GM12878 (cell line): ENCODE measurements at regions of chr2 and their contacts with region 1.

Region 1: GRCh38 chr2:71157124-71157793 is 26.8 kb downstream of the MPHOSPH10 start:
- DNase-seq: no peak
- ATAC-seq: peak; percentile 88
- H3K4me3 ChIP-seq: no peak overlapping the region
- H3K27ac ChIP-seq: no peak overlapping the region
- H3K4me1 ChIP-seq: no peaks in the 10 kb centered on the region
- H3K27me3 ChIP-seq: no peaks in the 10 kb centered on the region
- CTCF ChIP-seq: peak; percentile 58 to 76 (median 68)
- EP300 ChIP-seq: no peak
- POLR2A ChIP-seq: no peak
- RAD21 ChIP-seq: peak; percentile 67

Region 2: GRCh38 chr2:71018625-71019024 is 138.6 kb before region 1 on chr2:
- CTCF ChIA-PET with region 1: interaction called, 17 read pairs
- POLR2A ChIA-PET with region 1: no interaction called
- RAD21 ChIA-PET with region 1: interaction called, 12 read pairs
- SMC1A ChIA-PET with region 1: interaction called, 5 read pairs
- in situ Hi-C with region 1: no loop called
- intact Hi-C with region 1: loop called (anchors 2 kb)
- DNase-seq: no peak
- ATAC-seq: no peak
- H3K4me3 ChIP-seq: no peak overlapping the region
- H3K27ac ChIP-seq: no peak overlapping the region
- H3K4me1 ChIP-seq: no peaks in the 10 kb centered on the region
- H3K27me3 ChIP-seq: no peaks in the 10 kb centered on the region
- CTCF ChIP-seq: no peak
- EP300 ChIP-seq: no peak
- POLR2A ChIP-seq: no peak
- RAD21 ChIP-seq: no peak

Region 3: GRCh38 chr2:71049365-71050360 is 107.6 kb before region 1 on chr2:
- CTCF ChIA-PET with region 1: interaction called, 53 read pairs
- POLR2A ChIA-PET with region 1: no interaction called
- RAD21 ChIA-PET with region 1: interaction called, 31 read pairs
- SMC1A ChIA-PET with region 1: interaction called, 19 read pairs
- in situ Hi-C with region 1: no loop called
- intact Hi-C with region 1: loop called (anchors 1 kb)
- DNase-seq: no peak
- ATAC-seq: peak; percentile 90
- H3K4me3 ChIP-seq: no peak overlapping the region
- H3K27ac ChIP-seq: no peak overlapping the region
- H3K4me1 ChIP-seq: peaks cover 4% of the 10 kb centered on the region; the same call in 1 of the 2 replicates
- H3K27me3 ChIP-seq: no peaks in the 10 kb centered on the region
- CTCF ChIP-seq: peak; percentile 32 to 55 (median 35); a peak in 5 of 6 replicates
- EP300 ChIP-seq: no peak
- POLR2A ChIP-seq: no peak
- RAD21 ChIP-seq: peak; percentile 73

Region 4: GRCh38 chr2:71143782-71144181 is 13.5 kb before region 1 on chr2:
- CTCF ChIA-PET with region 1: interaction called, 11 read pairs
- POLR2A ChIA-PET with region 1: no interaction called
- RAD21 ChIA-PET with region 1: no interaction called
- SMC1A ChIA-PET with region 1: interaction called, 10 read pairs
- in situ Hi-C with region 1: no loop called
- intact Hi-C with region 1: no loop called
- DNase-seq: no peak
- ATAC-seq: no peak
- H3K4me3 ChIP-seq: no peak overlapping the region
- H3K27ac ChIP-seq: no peak overlapping the region
- H3K4me1 ChIP-seq: no peaks in the 10 kb centered on the region
- H3K27me3 ChIP-seq: no peaks in the 10 kb centered on the region
- CTCF ChIP-seq: no peak
- EP300 ChIP-seq: no peak
- POLR2A ChIP-seq: no peak
- RAD21 ChIP-seq: no peak

Region 5: GRCh38 chr2:71385012-71385411 is 227.8 kb after region 1 on chr2:
- CTCF ChIA-PET with region 1: no interaction called
- POLR2A ChIA-PET with region 1: no interaction called
- RAD21 ChIA-PET with region 1: no interaction called
- SMC1A ChIA-PET with region 1: no interaction called
- in situ Hi-C with region 1: no loop called
- intact Hi-C with region 1: loop called (anchors 10 kb)
- DNase-seq: no peak
- ATAC-seq: no peak
- H3K4me3 ChIP-seq: no peak overlapping the region
- H3K27ac ChIP-seq: no peak overlapping the region
- H3K4me1 ChIP-seq: no peaks in the 10 kb centered on the region
- H3K27me3 ChIP-seq: no peaks in the 10 kb centered on the region
- CTCF ChIP-seq: no peak
- EP300 ChIP-seq: no peak
- POLR2A ChIP-seq: no peak
- RAD21 ChIP-seq: no peak

Region 6: GRCh38 chr2:71449343-71449742 is 292.1 kb after region 1 on chr2:
- CTCF ChIA-PET with region 1: no interaction called
- POLR2A ChIA-PET with region 1: no interaction called
- RAD21 ChIA-PET with region 1: no interaction called
- SMC1A ChIA-PET with region 1: no interaction called
- in situ Hi-C with region 1: no loop called
- intact Hi-C with region 1: no loop called
- DNase-seq: no peak
- ATAC-seq: peak; percentile 43; the same call in 2 of the 3 replicates
- H3K4me3 ChIP-seq: no peak overlapping the region
- H3K27ac ChIP-seq: no peak overlapping the region
- H3K4me1 ChIP-seq: no peaks in the 10 kb centered on the region
- H3K27me3 ChIP-seq: peaks cover 4 to 11% of the 10 kb centered on the region in 2 experiments; a peak in 3 of 4 replicates
- CTCF ChIP-seq: no peak
- EP300 ChIP-seq: no peak
- POLR2A ChIP-seq: no peak
- RAD21 ChIP-seq: no peak

Region 7: GRCh38 chr2:71510196-71510807 is 353.0 kb after region 1 on chr2:
- CTCF ChIA-PET with region 1: interaction called, 10 read pairs
- POLR2A ChIA-PET with region 1: no interaction called
- RAD21 ChIA-PET with region 1: no interaction called
- SMC1A ChIA-PET with region 1: no interaction called
- in situ Hi-C with region 1: loop called (anchors 25 kb)
- intact Hi-C with region 1: loop called (anchors 1 kb)
- DNase-seq: no peak
- ATAC-seq: peak; percentile 92
- H3K4me3 ChIP-seq: no peak overlapping the region
- H3K27ac ChIP-seq: no peak overlapping the region
- H3K4me1 ChIP-seq: no peaks in the 10 kb centered on the region
- H3K27me3 ChIP-seq: peaks cover 0 to 6% of the 10 kb centered on the region in 2 experiments; a peak in 2 of 4 replicates
- CTCF ChIP-seq: peak; percentile 85 to 94 (median 90)
- EP300 ChIP-seq: no peak
- POLR2A ChIP-seq: no peak
- RAD21 ChIP-seq: peak; percentile 80

Region 8: GRCh38 chr2:71581026-71581425 is 423.8 kb after region 1 on chr2:
- CTCF ChIA-PET with region 1: no interaction called
- POLR2A ChIA-PET with region 1: no interaction called
- RAD21 ChIA-PET with region 1: no interaction called
- SMC1A ChIA-PET with region 1: no interaction called
- in situ Hi-C with region 1: no loop called
- intact Hi-C with region 1: no loop called
- DNase-seq: no peak
- ATAC-seq: no peak
- H3K4me3 ChIP-seq: no peak overlapping the region
- H3K27ac ChIP-seq: no peak overlapping the region
- H3K4me1 ChIP-seq: no peaks in the 10 kb centered on the region
- H3K27me3 ChIP-seq: no peaks in the 10 kb centered on the region; a peak in 1 of 4 replicates
- CTCF ChIP-seq: no peak
- EP300 ChIP-seq: no peak
- POLR2A ChIP-seq: no peak
- RAD21 ChIP-seq: no peak